HCT116 (cell line): ENCODE measurements at regions of chr14 and their contacts with region 1.

Region 1: GRCh38 chr14:88667555-88668273 is 104.9 kb downstream of the ZC3H14 start:
- DNase-seq: peak; percentile 68
- ATAC-seq: peak; percentile 97
- H3K4me3 ChIP-seq: no peak overlapping the region
- H3K27ac ChIP-seq: no peak overlapping the region
- H3K4me1 ChIP-seq: no peaks in the 10 kb centered on the region
- H3K27me3 ChIP-seq: no peaks in the 10 kb centered on the region
- CTCF ChIP-seq: peak; percentile 63 to 92 (median 90); a peak in 5 of 6 replicates
- POLR2A ChIP-seq: no peak
- RAD21 ChIP-seq: peak; percentile 82

Region 2: GRCh38 chr14:88868558-88869159 is 200.9 kb after region 1 on chr14:
- CTCF ChIA-PET with region 1: interaction called, 18 read pairs
- POLR2A ChIA-PET with region 1: no interaction called
- RAD21 ChIA-PET with region 1: interaction called in 1 of 2 experiments, 4 read pairs
- intact Hi-C with region 1: loop called (anchors 1 kb)
- DNase-seq: peak; percentile 24
- ATAC-seq: peak; percentile 82
- H3K4me3 ChIP-seq: no peak overlapping the region
- H3K27ac ChIP-seq: no peak overlapping the region
- H3K4me1 ChIP-seq: no peaks in the 10 kb centered on the region
- H3K27me3 ChIP-seq: no peaks in the 10 kb centered on the region
- CTCF ChIP-seq: peak; percentile 42 to 62 (median 59); a peak in 4 of 6 replicates
- POLR2A ChIP-seq: no peak
- RAD21 ChIP-seq: peak; percentile 77

Region 3: DNA sequence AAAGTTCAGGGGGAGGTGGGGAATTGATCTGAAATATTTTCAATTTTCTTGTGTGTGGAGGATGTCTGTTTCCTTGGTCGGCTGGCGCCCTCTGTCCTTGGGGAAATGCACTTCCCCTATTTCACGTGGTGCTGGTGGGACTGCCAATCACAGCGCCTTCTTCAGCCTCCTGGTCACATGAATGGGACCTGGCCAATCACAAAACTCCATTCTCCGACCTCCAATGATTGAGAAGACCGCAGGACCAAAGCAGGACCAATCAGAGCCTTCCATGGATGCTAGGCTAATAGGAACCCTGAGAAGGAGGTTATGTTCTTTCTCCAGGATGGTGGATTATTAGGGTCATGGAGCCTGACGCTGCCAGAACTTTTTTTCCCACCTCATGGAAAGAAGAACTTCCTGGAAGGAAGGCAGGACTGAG is 345.4 kb after region 1 on chr14:
- CTCF ChIA-PET with region 1: interaction called, 4 read pairs
- POLR2A ChIA-PET with region 1: no interaction called
- RAD21 ChIA-PET with region 1: no interaction called
- intact Hi-C with region 1: loop called (anchors 1 kb)
- DNase-seq: peak; percentile 50
- ATAC-seq: peak; percentile 90
- H3K4me3 ChIP-seq: no peak overlapping the region
- H3K27ac ChIP-seq: no peak overlapping the region
- H3K4me1 ChIP-seq: no peaks in the 10 kb centered on the region
- H3K27me3 ChIP-seq: no peaks in the 10 kb centered on the region
- CTCF ChIP-seq: peak in 2 of 3 experiments; percentile 42 to 63; a peak in 5 of 6 replicates
- POLR2A ChIP-seq: no peak
- RAD21 ChIP-seq: peak; percentile 71

Region 4: GRCh38 chr14:89915114-89915878 is 1247.6 kb after region 1 on chr14:
- CTCF ChIA-PET with region 1: no interaction called
- POLR2A ChIA-PET with region 1: no interaction called
- RAD21 ChIA-PET with region 1: no interaction called
- intact Hi-C with region 1: loop called (anchors 5 kb)
- DNase-seq: peak; percentile 57
- ATAC-seq: peak; percentile 68; the same call in 1 of the 2 replicates
- H3K4me3 ChIP-seq: no peak overlapping the region
- H3K27ac ChIP-seq: no peak overlapping the region
- H3K4me1 ChIP-seq: no peaks in the 10 kb centered on the region
- H3K27me3 ChIP-seq: no peaks in the 10 kb centered on the region
- CTCF ChIP-seq: peak; percentile 65 to 95 (median 90); a peak in 5 of 6 replicates
- POLR2A ChIP-seq: no peak
- RAD21 ChIP-seq: peak; percentile 82